Activated T-helper 2 cell treated with anti-CD3 and anti-CD28 coated beads, Interferon-gamma antibody, Interleukin-2, Interleukin-4, amounts not matched to agents 10 μg/mL and 5 μg/mL and 100 μg/mL, durations not matched to agents 14 hours and 24 hours and 36 hours (primary cell): ENCODE measurements at regions of chr17 and their contacts with region 1.

Region 1: GRCh38 chr17:40098846-40099618 is 1.4 kb downstream of the NR1D1 start:
- DNase-seq: peak; percentile 95
- H3K4me3 Mint-ChIP-seq: peak overlapping the region; percentile 87
- H3K27ac Mint-ChIP-seq: peak overlapping the region; percentile 71
- H3K4me1 Mint-ChIP-seq: peaks cover 70% of the 10 kb centered on the region
- H3K27me3 Mint-ChIP-seq: no peaks in the 10 kb centered on the region

Region 2: GRCh38 chr17:39952680-39953470 is 146.2 kb before region 1 on chr17:
- intact Hi-C with region 1: loop called (anchors 10 kb)
- DNase-seq: peak; percentile 84
- H3K4me3 Mint-ChIP-seq: peak overlapping the region; percentile 78
- H3K27ac Mint-ChIP-seq: peak overlapping the region; percentile 68
- H3K4me1 Mint-ChIP-seq: peaks cover 8% of the 10 kb centered on the region
- H3K27me3 Mint-ChIP-seq: peaks cover 4% of the 10 kb centered on the region

Region 3: GRCh38 chr17:40062329-40063186 is 36.5 kb before region 1 on chr17 and contains the start of gene THRA:
- intact Hi-C with region 1: loop called (anchors 5 kb)
- DNase-seq: peak; percentile 60
- H3K4me3 Mint-ChIP-seq: peak within 1 kb of the TSS; percentile 79
- H3K27ac Mint-ChIP-seq: peak within 1 kb of the TSS; percentile 3
- H3K4me1 Mint-ChIP-seq: peaks cover 16% of the 10 kb centered on the region
- H3K27me3 Mint-ChIP-seq: peaks cover 28% of the 10 kb centered on the region
- total RNA-seq, gene THRA: 4.9 and 5.6 TPM in 2 replicates

Region 4: GRCh38 chr17:40113110-40113906 is 14.3 kb after region 1 on chr17:
- intact Hi-C with region 1: loop called (anchors 1 kb)
- DNase-seq: peak; percentile 89
- H3K4me3 Mint-ChIP-seq: peak overlapping the region; percentile 81
- H3K27ac Mint-ChIP-seq: peak overlapping the region; percentile 89
- H3K4me1 Mint-ChIP-seq: peaks cover 40% of the 10 kb centered on the region
- H3K27me3 Mint-ChIP-seq: no peaks in the 10 kb centered on the region

Region 5: GRCh38 chr17:40139566-40140058 is 40.6 kb after region 1 on chr17:
- intact Hi-C with region 1: loop called (anchors 2 kb)
- DNase-seq: peak; percentile 16
- H3K4me3 Mint-ChIP-seq: peak overlapping the region; percentile 89
- H3K27ac Mint-ChIP-seq: peak overlapping the region; percentile 82
- H3K4me1 Mint-ChIP-seq: peaks cover 21% of the 10 kb centered on the region
- H3K27me3 Mint-ChIP-seq: no peaks in the 10 kb centered on the region

Region 6: DNA sequence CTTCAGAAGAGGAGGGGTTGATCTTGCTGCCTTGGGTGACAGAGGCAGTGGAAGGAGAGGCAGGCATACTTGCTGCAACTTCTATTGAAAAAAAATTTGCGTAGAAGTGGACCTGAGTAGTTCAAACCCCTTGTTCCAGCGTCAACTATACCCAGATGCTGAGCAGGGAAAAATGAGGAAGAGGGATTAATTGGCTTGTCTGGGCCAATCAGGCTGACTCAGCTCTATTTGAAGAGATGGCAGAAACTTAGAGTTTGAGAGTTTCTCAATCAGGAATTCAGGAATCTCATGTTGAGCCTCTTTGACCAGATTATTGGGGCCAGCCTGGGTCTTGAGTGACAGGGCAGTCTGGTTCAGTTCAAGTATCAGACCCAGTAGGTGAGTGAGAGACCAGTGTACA is 58.9 kb after region 1 on chr17:
- intact Hi-C with region 1: loop called (anchors 1 kb)
- DNase-seq: no peak
- H3K4me3 Mint-ChIP-seq: no peak overlapping the region
- H3K27ac Mint-ChIP-seq: no peak overlapping the region
- H3K4me1 Mint-ChIP-seq: peaks cover 17% of the 10 kb centered on the region
- H3K27me3 Mint-ChIP-seq: no peaks in the 10 kb centered on the region

Region 7: GRCh38 chr17:40287494-40288369 is 188.7 kb after region 1 on chr17 and contains the start of gene CDC6:
- intact Hi-C with region 1: loop called (anchors 10 kb)
- DNase-seq: peak; percentile 99
- H3K4me3 Mint-ChIP-seq: peak within 1 kb of the TSS; percentile 100
- H3K27ac Mint-ChIP-seq: peak within 1 kb of the TSS; percentile 98
- H3K4me1 Mint-ChIP-seq: peaks cover 48% of the 10 kb centered on the region
- H3K27me3 Mint-ChIP-seq: no peaks in the 10 kb centered on the region
- total RNA-seq, gene CDC6: 126 and 133 TPM in 2 replicates